K562 (cell line): ENCODE measurements at regions of chr9 and their contacts with region 1.

Region 1: GRCh38 chr9:127734747-127735529 is at the start of gene TOR2A:
- DNase-seq: peak; percentile 95 to 98 (median 97)
- ATAC-seq: peak; percentile 98
- H3K4me3 ChIP-seq: peak within 1 kb of the TSS; percentile 74
- H3K27ac ChIP-seq: peak within 1 kb of the TSS; percentile 87
- H3K4me1 ChIP-seq: peaks cover 7 to 43% of the 10 kb centered on the region in 2 experiments; a peak in 4 of 5 replicates
- H3K27me3 ChIP-seq: no peaks in the 10 kb centered on the region
- CTCF ChIP-seq: peak; percentile 96 to 98 (median 98)
- EP300 ChIP-seq: no peak
- POLR2A ChIP-seq: peak; percentile 79
- RAD21 ChIP-seq: peak; percentile 98 to 99
- polyA plus RNA-seq, gene TOR2A: 0.80 to 1.1 TPM

Region 2: GRCh38 chr9:127503947-127504782 is 230.8 kb before region 1 on chr9:
- CTCF ChIA-PET with region 1: interaction called, 16 read pairs
- POLR2A ChIA-PET with region 1: no interaction called
- in situ Hi-C with region 1: loop called (anchors 5 kb)
- intact Hi-C with region 1: loop called (anchors 2 kb)
- DNase-seq: peak; percentile 68 to 87 (median 76)
- ATAC-seq: peak; percentile 94
- H3K4me3 ChIP-seq: no peak overlapping the region
- H3K27ac ChIP-seq: no peak overlapping the region
- H3K4me1 ChIP-seq: peaks cover 14 to 62% of the 10 kb centered on the region in 2 experiments
- H3K27me3 ChIP-seq: no peaks in the 10 kb centered on the region
- CTCF ChIP-seq: peak; percentile 92 to 94 (median 93)
- EP300 ChIP-seq: no peak
- POLR2A ChIP-seq: no peak
- RAD21 ChIP-seq: peak; percentile 90 to 95

Region 3: DNA sequence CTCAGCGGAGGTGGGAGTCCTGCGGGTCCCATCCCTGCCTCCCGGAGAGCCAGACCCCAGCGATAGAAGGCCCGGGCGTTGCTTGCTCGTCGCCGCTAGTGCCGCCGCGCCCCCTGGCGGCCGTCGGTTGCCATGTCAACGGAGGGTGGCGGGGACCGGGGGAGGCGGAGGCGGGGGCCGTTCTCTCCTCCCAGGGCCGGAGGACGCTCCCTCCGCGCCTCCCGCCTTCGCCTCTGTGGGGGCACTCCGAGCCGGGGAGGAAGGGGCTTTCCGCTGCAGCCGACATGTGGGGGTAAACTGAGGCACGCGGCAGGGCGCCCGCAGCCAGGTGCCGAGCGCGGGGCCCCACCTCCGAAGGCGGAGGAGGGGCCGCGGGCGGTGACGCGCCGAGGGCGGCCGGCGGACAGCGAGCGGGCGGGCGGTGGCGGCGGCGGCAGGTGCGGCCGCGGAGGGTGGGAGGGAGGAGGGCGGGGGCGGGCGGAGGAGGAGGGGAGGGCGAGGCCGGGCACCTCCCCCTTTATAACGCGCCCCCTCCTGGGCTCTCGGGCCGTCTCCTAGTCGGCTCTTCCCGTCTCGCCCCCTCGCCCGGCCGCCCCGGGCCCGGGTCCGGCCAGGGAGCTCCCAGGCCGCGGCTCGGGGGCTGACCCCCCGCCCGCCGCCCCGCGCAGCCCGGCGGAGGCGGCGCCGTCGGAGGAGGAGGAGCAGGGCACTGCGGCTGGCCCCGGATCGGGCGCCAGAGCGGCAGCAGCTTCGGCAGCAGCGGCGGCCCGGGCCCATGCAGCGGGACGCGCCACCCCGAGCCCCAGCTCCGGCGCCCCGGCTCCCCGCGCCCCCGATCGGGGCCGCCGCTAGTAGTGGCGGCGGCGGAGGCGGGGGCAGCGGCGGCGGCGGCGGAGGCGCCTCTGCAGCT is 50.3 kb after region 1 on chr9:
- CTCF ChIA-PET with region 1: interaction called, 46 read pairs
- POLR2A ChIA-PET with region 1: interaction called, 4 read pairs
- in situ Hi-C with region 1: loop called (anchors 5 kb)
- intact Hi-C with region 1: loop called (anchors 1 kb)
- DNase-seq: peak; percentile 88 to 94 (median 90)
- ATAC-seq: peak; percentile 74
- H3K4me3 ChIP-seq: peak overlapping the region; percentile 99
- H3K27ac ChIP-seq: peak overlapping the region; percentile 93
- H3K4me1 ChIP-seq: peaks cover 7 to 41% of the 10 kb centered on the region in 2 experiments; a peak in 4 of 5 replicates
- H3K27me3 ChIP-seq: no peaks in the 10 kb centered on the region
- CTCF ChIP-seq: peak; percentile 76 to 94 (median 86)
- EP300 ChIP-seq: no peak
- POLR2A ChIP-seq: no peak
- RAD21 ChIP-seq: peak; percentile 85 to 92

Region 4: GRCh38 chr9:127869310-127870152 is 134.6 kb after region 1 on chr9:
- CTCF ChIA-PET with region 1: interaction called, 31 read pairs
- POLR2A ChIA-PET with region 1: interaction called, 3 read pairs
- in situ Hi-C with region 1: loop called (anchors 5 kb)
- intact Hi-C with region 1: loop called (anchors 1 kb)
- DNase-seq: peak; percentile 91 to 93 (median 92)
- ATAC-seq: peak; percentile 97
- H3K4me3 ChIP-seq: no peak overlapping the region
- H3K27ac ChIP-seq: no peak overlapping the region
- H3K4me1 ChIP-seq: peaks cover 17 to 69% of the 10 kb centered on the region in 2 experiments
- H3K27me3 ChIP-seq: no peaks in the 10 kb centered on the region
- CTCF ChIP-seq: peak; percentile 93 to 99 (median 97)
- EP300 ChIP-seq: 0 out of 2 replicates have a peak, but pooled peaks have one; percentile 16
- POLR2A ChIP-seq: no peak
- RAD21 ChIP-seq: peak; percentile 97 to 98

Region 5: DNA sequence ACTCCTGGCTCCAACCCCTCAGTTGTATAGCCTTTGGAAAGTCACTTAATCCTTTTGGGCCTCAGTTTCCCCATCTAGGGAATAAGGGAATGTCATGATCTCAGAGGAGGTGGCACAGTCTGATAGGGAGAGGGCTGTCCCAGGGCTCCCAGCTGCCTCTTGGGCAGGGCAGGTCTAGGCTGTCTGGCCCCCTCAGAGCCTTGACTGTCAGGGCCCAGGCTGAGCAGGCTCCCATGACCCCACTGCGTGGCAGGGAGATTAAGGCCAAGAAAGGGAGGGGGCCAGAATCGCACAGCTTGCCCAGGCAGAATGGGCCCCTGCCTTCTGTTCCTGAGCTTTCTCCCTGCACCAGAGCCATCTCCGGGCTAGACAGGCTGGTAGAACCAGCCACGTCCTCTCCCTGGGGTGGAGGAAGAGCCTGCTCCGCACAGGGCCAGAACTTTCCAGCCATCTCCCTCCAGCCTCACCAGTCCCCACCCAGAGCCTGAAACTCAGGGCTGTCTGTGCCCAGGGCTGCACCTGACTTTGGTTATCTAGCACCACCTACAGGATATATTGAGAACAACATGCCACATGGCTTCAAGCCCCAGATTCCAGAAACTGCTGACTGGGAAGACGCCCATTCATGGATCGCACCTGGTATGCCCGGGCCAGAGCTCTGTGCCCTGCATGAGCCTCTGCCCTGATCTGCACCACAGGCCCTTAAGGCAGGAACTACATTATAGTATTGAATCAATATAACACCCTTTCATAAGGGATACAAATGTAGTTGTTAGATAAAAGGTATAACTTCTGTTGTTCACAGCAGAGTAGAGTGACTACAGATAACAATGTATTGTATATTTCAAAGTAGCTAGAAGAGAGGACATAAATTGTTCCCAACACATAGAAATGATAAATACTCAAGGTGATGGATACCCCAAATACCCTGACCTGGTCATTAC is 300.2 kb after region 1 on chr9:
- CTCF ChIA-PET with region 1: no interaction called
- POLR2A ChIA-PET with region 1: no interaction called
- in situ Hi-C with region 1: no loop called
- intact Hi-C with region 1: loop called (anchors 10 kb)
- DNase-seq: peak; percentile 81 to 88 (median 86)
- ATAC-seq: peak; percentile 97
- H3K4me3 ChIP-seq: no peak overlapping the region
- H3K27ac ChIP-seq: no peak overlapping the region
- H3K4me1 ChIP-seq: peaks cover 7 to 8% of the 10 kb centered on the region in 2 experiments
- H3K27me3 ChIP-seq: no peaks in the 10 kb centered on the region
- CTCF ChIP-seq: peak; percentile 93 to 95 (median 93)
- EP300 ChIP-seq: peak; percentile 48
- POLR2A ChIP-seq: no peak
- RAD21 ChIP-seq: peak; percentile 96 to 98